Aorta (tissue), 5 donors: ENCODE measurements at regions of chr2 and their contacts with region 1.

Region 1: DNA sequence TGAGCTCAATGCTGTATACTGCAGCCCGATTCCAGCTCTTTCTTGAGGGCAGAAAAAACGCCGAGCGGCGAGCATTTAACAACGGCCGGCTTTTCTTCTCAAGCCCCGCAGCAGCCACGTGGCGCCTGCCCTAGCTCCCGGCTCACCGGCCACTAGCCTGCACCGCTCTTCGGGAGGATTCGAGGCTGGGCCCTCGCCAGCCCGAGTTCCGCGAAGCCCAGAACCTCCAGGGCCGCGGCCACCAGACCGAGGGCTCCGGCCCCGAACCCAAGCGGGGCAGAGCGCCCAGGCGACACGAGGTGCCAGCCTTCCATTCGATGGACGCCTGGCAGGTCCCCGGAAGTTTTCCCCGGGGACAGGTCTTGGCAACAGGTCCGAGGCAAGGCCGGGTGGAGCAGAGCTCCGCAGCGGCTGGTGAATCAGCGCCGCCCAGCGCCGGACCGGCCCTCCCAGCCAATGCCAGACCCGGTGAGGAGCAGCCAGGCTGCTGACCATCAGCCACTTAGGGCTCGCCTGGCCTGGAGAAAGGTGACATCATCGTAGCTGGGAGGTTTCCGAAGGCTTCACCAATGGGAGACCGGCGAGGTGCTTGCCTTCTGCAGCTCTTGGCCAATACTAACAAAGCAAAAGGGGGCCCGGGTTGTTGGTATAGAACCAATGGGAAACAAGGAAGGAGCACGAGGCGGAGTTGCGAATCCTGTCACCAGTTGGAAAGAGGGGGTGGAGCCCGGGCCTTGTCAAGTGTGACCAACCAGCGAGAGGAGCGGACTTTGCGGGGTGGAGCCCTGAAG is 544 bp upstream of the MXD1 start:
- DNase-seq: peak; percentile 99 to 100
- ATAC-seq: peak; percentile 97
- H3K4me3 ChIP-seq: peak overlapping the region; percentile 1 to 34
- H3K27ac ChIP-seq: peak overlapping the region in 1 of 2 donors; percentile 73
- H3K4me1 ChIP-seq: peaks cover 0 to 4% of the 10 kb centered on the region in 2 donors
- H3K27me3 ChIP-seq: no peaks in the 10 kb centered on the region

Region 2: GRCh38 chr2:69163109-69163508 is 751.3 kb before region 1 on chr2:
- intact Hi-C with region 1: no loop called
- DNase-seq: peak in 1 of 2 donors; percentile 57
- ATAC-seq: peak; percentile 82
- H3K4me3 ChIP-seq: no peak overlapping the region
- H3K27ac ChIP-seq: peak overlapping the region; percentile 93 to 99
- H3K4me1 ChIP-seq: peaks cover 4 to 22% of the 10 kb centered on the region in 2 donors
- H3K27me3 ChIP-seq: no peaks in the 10 kb centered on the region

Region 3: GRCh38 chr2:70070541-70071268 is 156.3 kb after region 1 on chr2:
- intact Hi-C with region 1: loop called in 1 of 2 experiments (anchors 2 kb)
- DNase-seq: peak in 1 of 2 donors; percentile 71
- ATAC-seq: peak; percentile 95
- H3K4me3 ChIP-seq: no peak overlapping the region
- H3K27ac ChIP-seq: peak overlapping the region; percentile 7 to 68
- H3K4me1 ChIP-seq: no peaks in the 10 kb centered on the region
- H3K27me3 ChIP-seq: no peaks in the 10 kb centered on the region

Region 4: DNA sequence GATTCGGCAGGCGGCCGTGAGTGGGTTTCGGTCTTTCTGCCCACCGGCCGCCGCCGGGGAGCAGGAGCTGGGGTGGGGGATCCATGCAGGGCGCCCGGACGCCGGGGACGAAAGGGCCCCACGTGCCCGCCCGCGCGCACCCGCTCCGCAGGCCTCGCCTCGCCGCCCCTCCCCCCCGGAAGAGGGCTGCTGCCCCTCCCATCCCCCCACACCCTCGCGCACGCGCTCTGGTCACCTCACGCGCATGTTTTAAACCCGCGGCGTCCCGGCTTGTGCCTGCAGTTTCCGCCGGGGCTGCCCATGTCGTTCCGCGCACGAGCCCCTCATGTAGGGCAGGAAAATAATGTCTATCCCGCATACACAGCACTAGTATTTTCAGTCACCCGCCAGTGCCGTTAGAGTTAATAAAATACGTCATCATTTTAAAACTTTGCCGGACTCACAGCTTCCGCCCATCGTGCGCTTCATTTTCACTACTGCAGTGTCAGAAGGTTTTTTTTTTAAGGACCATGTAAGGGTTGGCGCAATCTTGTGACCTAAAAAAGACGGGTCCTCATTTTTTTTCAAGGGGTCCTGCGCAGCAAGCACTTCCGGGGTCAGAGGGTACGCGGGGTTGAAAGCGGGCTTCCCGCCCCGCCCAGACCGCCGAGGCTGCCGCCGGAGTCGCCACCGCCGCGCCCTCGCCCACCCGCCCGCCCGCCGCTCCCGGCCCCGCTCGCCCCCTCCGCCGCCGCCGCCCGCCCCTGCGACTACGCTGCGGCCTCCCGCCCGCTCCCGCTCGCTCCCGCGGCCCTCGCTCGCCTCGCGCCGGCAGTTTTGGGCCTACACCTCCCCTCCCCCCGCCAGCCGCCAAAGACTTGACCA is 172.7 kb after region 1 on chr2 and contains the start of gene PCBP1:
- intact Hi-C with region 1: loop called (anchors 5 to 10 kb)
- DNase-seq: peak; percentile 97 to 99
- ATAC-seq: peak; percentile 96
- H3K4me3 ChIP-seq: peak within 1 kb of the TSS; percentile 75 to 96
- H3K27ac ChIP-seq: peak within 1 kb of the TSS; percentile 89 to 100
- H3K4me1 ChIP-seq: peaks cover 0 to 2% of the 10 kb centered on the region in 2 donors
- H3K27me3 ChIP-seq: no peaks in the 10 kb centered on the region
- total RNA-seq, gene PCBP1: 263 to 288 TPM

Region 5: GRCh38 chr2:70142590-70143313 is 228.4 kb after region 1 on chr2:
- intact Hi-C with region 1: loop called (anchors 1 to 2 kb)
- DNase-seq: peak; percentile 100
- ATAC-seq: peak; percentile 95
- H3K4me3 ChIP-seq: peak overlapping the region; percentile 42 to 63
- H3K27ac ChIP-seq: peak overlapping the region; percentile 78 to 92
- H3K4me1 ChIP-seq: no peaks in the 10 kb centered on the region
- H3K27me3 ChIP-seq: no peaks in the 10 kb centered on the region

Region 6: GRCh38 chr2:70301344-70302194 is 387.2 kb after region 1 on chr2 and contains the start of gene FAM136A:
- intact Hi-C with region 1: loop called in 1 of 2 experiments (anchors 10 kb)
- DNase-seq: peak; percentile 92 to 97
- ATAC-seq: peak; percentile 98
- H3K4me3 ChIP-seq: peak within 1 kb of the TSS; percentile 68 to 70
- H3K27ac ChIP-seq: peak within 1 kb of the TSS in 1 of 2 donors; percentile 1
- H3K4me1 ChIP-seq: no peaks in the 10 kb centered on the region
- H3K27me3 ChIP-seq: no peaks in the 10 kb centered on the region
- total RNA-seq, gene FAM136A: 15.7 to 19.8 TPM